Dendritic cell treated with granulocyte-macrophage colony-stimulating factor and Interleukin-4, amounts not matched to agents 40 ng/mL and 50 ng/mL, for 4 days (primary cell): ENCODE measurements at regions of chr3 and their contacts with region 1.

Region 1: GRCh38 chr3:84547971-84548970 is 410.5 kb upstream of the CADM2 start:
- H3K4me3 Mint-ChIP-seq: no peak overlapping the region
- H3K27ac Mint-ChIP-seq: no peak overlapping the region
- H3K4me1 Mint-ChIP-seq: no peaks in the 10 kb centered on the region
- H3K27me3 Mint-ChIP-seq: no peaks in the 10 kb centered on the region

Region 2: GRCh38 chr3:84772841-84773240 is 224.6 kb after region 1 on chr3:
- intact Hi-C with region 1: loop called (anchors 1 kb)
- H3K4me3 Mint-ChIP-seq: no peak overlapping the region
- H3K27ac Mint-ChIP-seq: no peak overlapping the region
- H3K4me1 Mint-ChIP-seq: no peaks in the 10 kb centered on the region
- H3K27me3 Mint-ChIP-seq: no peaks in the 10 kb centered on the region

Region 3: GRCh38 chr3:85576091-85576690 is 1027.9 kb after region 1 on chr3:
- intact Hi-C with region 1: loop called (anchors 1 kb)
- H3K4me3 Mint-ChIP-seq: no peak overlapping the region
- H3K27ac Mint-ChIP-seq: no peak overlapping the region
- H3K4me1 Mint-ChIP-seq: no peaks in the 10 kb centered on the region
- H3K27me3 Mint-ChIP-seq: no peaks in the 10 kb centered on the region